IMR-90 (cell line): ENCODE measurements at regions of chrX and their contacts with region 1.

Region 1: GRCh38 chrX:75156021-75156945 is at the start of gene ABCB7:
- DNase-seq: peak; percentile 67
- ATAC-seq: peak; percentile 98
- H3K4me3 ChIP-seq: peak within 1 kb of the TSS; percentile 74
- H3K27ac ChIP-seq: peak within 1 kb of the TSS; percentile 81
- H3K4me1 ChIP-seq: no peaks in the 10 kb centered on the region
- H3K27me3 ChIP-seq: no peaks in the 10 kb centered on the region
- CTCF ChIP-seq: peak; percentile 19; the same call in 1 of the 2 replicates
- POLR2A ChIP-seq: no peak
- RAD21 ChIP-seq: no peak
- total RNA-seq, gene ABCB7: 15.8 and 17.5 TPM in 2 replicates

Region 2: DNA sequence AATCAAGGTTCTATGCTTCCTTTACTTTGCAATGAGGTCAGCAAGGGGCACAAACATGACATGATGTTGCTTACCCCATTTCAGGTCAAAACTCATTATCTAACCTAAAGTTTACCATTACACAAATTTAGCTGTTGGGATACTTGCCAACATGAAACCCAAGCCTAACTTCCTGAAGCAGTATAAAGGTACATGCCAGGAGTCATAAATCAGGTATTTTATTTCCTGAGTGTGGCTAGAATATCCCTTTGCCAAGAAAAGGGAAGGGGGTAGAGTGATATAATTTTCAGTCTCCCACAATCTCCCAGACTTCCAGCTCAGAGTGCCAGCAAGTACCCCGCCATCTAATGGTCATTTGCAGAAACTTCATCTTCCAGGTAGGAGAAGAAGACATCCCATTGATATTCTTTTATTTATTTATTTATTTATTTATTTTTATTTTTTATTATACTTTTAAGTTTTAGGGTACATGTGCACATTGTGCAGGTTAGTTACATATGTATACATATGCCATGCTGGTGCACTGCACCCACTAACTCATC is 367.7 kb before region 1 on chrX:
- CTCF ChIA-PET with region 1: no interaction called
- POLR2A ChIA-PET with region 1: no interaction called
- dilution Hi-C with region 1: no loop called
- in situ Hi-C with region 1: no loop called
- intact Hi-C with region 1: no loop called
- DNase-seq: no peak
- ATAC-seq: no peak
- H3K4me3 ChIP-seq: no peak overlapping the region
- H3K27ac ChIP-seq: no peak overlapping the region
- H3K4me1 ChIP-seq: no peaks in the 10 kb centered on the region
- H3K27me3 ChIP-seq: no peaks in the 10 kb centered on the region
- CTCF ChIP-seq: no peak
- POLR2A ChIP-seq: no peak
- RAD21 ChIP-seq: no peak

Region 3: GRCh38 chrX:74980802-74981201 is 175.5 kb before region 1 on chrX:
- CTCF ChIA-PET with region 1: no interaction called
- POLR2A ChIA-PET with region 1: no interaction called
- dilution Hi-C with region 1: no loop called
- in situ Hi-C with region 1: no loop called
- intact Hi-C with region 1: no loop called
- DNase-seq: no peak
- ATAC-seq: no peak
- H3K4me3 ChIP-seq: no peak overlapping the region
- H3K27ac ChIP-seq: no peak overlapping the region
- H3K4me1 ChIP-seq: no peaks in the 10 kb centered on the region
- H3K27me3 ChIP-seq: no peaks in the 10 kb centered on the region
- CTCF ChIP-seq: no peak
- POLR2A ChIP-seq: no peak
- RAD21 ChIP-seq: no peak

Region 4: DNA sequence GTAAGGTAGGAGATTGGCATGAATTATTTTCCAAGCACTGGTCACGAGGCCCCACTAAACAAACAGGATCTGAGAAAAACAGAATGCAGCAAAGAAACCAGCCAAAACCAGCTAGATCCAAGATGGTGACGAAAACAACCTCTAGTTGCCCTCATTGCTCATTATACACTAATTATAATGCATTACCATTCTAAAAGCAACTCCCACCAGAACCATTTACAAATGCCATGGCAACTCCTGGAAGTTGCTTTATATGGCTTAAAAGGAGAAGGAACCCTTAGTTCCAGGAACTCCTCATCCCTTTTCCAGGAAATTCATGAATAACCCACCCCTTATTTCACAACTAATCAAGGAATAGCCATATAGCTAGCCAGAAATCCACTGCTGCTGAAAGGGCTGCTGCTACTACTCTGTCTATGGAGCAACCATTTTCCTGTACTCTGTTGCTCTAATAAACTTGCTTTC is 69.5 kb before region 1 on chrX:
- CTCF ChIA-PET with region 1: no interaction called
- POLR2A ChIA-PET with region 1: no interaction called
- dilution Hi-C with region 1: no loop called
- in situ Hi-C with region 1: no loop called
- intact Hi-C with region 1: no loop called
- DNase-seq: no peak
- ATAC-seq: no peak
- H3K4me3 ChIP-seq: no peak overlapping the region
- H3K27ac ChIP-seq: no peak overlapping the region
- H3K4me1 ChIP-seq: no peaks in the 10 kb centered on the region
- H3K27me3 ChIP-seq: no peaks in the 10 kb centered on the region
- CTCF ChIP-seq: no peak
- POLR2A ChIP-seq: no peak
- RAD21 ChIP-seq: no peak

Region 5: GRCh38 chrX:75210602-75211001 is 54.3 kb after region 1 on chrX:
- CTCF ChIA-PET with region 1: no interaction called
- POLR2A ChIA-PET with region 1: no interaction called
- dilution Hi-C with region 1: no loop called
- in situ Hi-C with region 1: loop called (anchors 10 kb)
- intact Hi-C with region 1: no loop called
- DNase-seq: no peak
- ATAC-seq: no peak
- H3K4me3 ChIP-seq: no peak overlapping the region
- H3K27ac ChIP-seq: no peak overlapping the region
- H3K4me1 ChIP-seq: no peaks in the 10 kb centered on the region
- H3K27me3 ChIP-seq: no peaks in the 10 kb centered on the region; the same call in 1 of the 2 replicates
- CTCF ChIP-seq: no peak
- POLR2A ChIP-seq: no peak
- RAD21 ChIP-seq: no peak

Region 6: GRCh38 chrX:75273483-75273882 is 117.2 kb after region 1 on chrX:
- CTCF ChIA-PET with region 1: no interaction called
- POLR2A ChIA-PET with region 1: no interaction called
- dilution Hi-C with region 1: no loop called
- in situ Hi-C with region 1: no loop called
- intact Hi-C with region 1: loop called (anchors 1 kb)
- DNase-seq: no peak
- ATAC-seq: peak; percentile 3; the same call in 1 of the 2 replicates
- H3K4me3 ChIP-seq: peak overlapping the region; percentile 84
- H3K27ac ChIP-seq: no peak overlapping the region
- H3K4me1 ChIP-seq: no peaks in the 10 kb centered on the region
- H3K27me3 ChIP-seq: no peaks in the 10 kb centered on the region
- CTCF ChIP-seq: no peak
- POLR2A ChIP-seq: no peak
- RAD21 ChIP-seq: no peak

Region 7: DNA sequence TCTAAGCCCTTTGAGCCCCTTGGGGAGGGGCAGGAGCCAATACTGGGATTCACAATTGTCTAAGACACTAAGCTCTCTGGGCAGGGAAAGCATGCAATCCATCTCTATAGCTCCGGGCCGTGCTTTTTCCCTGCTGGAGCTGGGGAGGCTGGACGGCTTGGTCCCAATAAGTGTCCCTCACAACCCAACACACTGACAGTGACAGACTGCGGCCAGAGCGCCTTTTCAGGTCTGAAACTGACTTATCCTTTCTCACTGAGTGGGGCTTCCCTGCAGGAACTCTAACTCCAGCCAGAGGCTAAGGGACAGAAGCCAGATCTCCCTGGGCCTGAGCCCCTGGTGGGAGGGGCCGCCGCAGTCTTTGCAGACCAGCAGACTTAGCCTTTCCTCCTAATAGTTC is 870.0 kb after region 1 on chrX:
- CTCF ChIA-PET with region 1: no interaction called
- POLR2A ChIA-PET with region 1: no interaction called
- dilution Hi-C with region 1: no loop called
- in situ Hi-C with region 1: no loop called
- intact Hi-C with region 1: no loop called
- DNase-seq: no peak
- ATAC-seq: no peak
- H3K4me3 ChIP-seq: no peak overlapping the region
- H3K27ac ChIP-seq: no peak overlapping the region
- H3K4me1 ChIP-seq: no peaks in the 10 kb centered on the region
- H3K27me3 ChIP-seq: no peaks in the 10 kb centered on the region
- CTCF ChIP-seq: no peak
- POLR2A ChIP-seq: no peak
- RAD21 ChIP-seq: no peak